CD4-positive, alpha-beta memory T cell (primary cell): ENCODE measurements at regions of chrX and their contacts with region 1.

Region 1: DNA sequence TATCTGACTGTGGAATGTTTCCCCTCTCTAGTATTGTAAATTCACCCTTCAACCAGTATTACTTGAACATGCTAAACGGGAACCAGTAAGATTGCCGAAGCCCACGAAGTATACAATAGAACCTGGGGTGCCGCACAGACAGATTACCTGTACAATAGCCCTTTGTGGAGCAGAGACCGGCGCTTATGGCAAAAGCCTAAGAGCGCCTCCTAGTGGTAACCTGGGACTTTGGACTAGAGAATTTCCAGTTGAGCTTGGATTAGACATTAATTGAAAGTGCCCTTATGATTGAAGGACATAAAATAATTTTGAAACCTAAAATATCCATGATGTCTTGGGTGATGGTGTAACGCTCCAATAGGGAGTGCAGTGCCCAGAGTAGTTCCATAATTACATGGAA is 14.1 kb downstream of the ZNF157 start:
- DNase-seq: peak; percentile 71 to 80 (median 77)
- H3K4me3 ChIP-seq: no peak overlapping the region
- H3K4me3 Mint-ChIP-seq: peak overlapping the region in 1 of 8 donors; percentile 43
- H3K27ac ChIP-seq: no peak overlapping the region
- H3K27ac Mint-ChIP-seq: peak overlapping the region in 2 of 7 donors; percentile 14 to 70
- H3K4me1 ChIP-seq: peaks cover 18% of the 10 kb centered on the region
- H3K4me1 Mint-ChIP-seq: peaks cover 9 to 20% (median 13%) of the 10 kb centered on the region in 4 donors
- H3K27me3 ChIP-seq: no peaks in the 10 kb centered on the region
- H3K27me3 Mint-ChIP-seq: no peaks in the 10 kb centered on the region

Region 2: GRCh38 chrX:46244451-46244850 is 1140.1 kb before region 1 on chrX:
- CTCF ChIA-PET with region 1: no interaction called
- POLR2A ChIA-PET with region 1: no interaction called
- intact Hi-C with region 1: no loop called
- DNase-seq: no peak
- H3K4me3 ChIP-seq: no peak overlapping the region
- H3K4me3 Mint-ChIP-seq: no peak overlapping the region
- H3K27ac ChIP-seq: no peak overlapping the region
- H3K27ac Mint-ChIP-seq: no peak overlapping the region
- H3K4me1 ChIP-seq: no peaks in the 10 kb centered on the region
- H3K4me1 Mint-ChIP-seq: no peaks in the 10 kb centered on the region
- H3K27me3 ChIP-seq: no peaks in the 10 kb centered on the region
- H3K27me3 Mint-ChIP-seq: no peaks in the 10 kb centered on the region

Region 3: DNA sequence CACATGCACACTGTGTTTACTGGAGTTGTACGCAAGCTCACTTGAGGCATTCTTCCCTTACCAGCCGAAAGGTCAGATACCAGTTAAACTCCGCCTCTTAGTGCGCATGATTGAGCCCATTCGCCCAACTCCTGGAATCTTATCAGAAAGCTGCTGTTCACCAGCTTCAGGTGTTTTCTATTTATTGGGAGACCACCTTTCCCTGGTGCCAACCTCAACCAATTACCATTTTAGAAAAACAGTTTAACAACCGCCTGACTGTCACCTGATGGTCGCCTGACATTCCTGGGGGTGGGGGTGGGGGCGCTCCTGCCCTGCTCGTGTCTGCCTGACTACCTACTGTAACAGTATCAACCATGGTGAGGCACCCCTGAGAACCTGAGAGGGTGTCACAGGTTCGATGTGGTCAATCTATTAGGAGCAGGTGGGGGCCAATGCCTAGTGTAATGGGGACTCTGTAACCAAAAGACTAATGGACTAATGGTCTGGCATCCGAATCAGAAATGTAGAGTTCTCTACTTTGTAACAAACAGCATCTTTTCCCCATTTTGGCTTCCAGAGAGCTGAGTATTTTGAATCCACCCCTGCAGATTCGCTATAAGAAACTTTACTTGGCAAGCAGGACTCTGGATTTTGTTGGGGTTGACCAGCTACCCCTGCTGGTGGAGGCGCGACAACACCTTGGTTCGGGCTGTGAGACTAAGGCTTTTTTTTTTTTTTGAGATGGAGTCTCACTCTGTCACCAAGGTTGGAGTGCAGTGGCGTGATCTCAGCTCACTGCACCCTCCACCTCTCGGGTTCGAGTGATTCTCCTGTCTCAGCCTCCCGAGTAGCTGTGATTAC is 72.3 kb before region 1 on chrX:
- CTCF ChIA-PET with region 1: interaction called, 10 read pairs
- POLR2A ChIA-PET with region 1: interaction called, 4 read pairs
- intact Hi-C with region 1: loop called (anchors 5 kb)
- DNase-seq: peak; percentile 40 to 62 (median 47)
- H3K4me3 ChIP-seq: no peak overlapping the region
- H3K4me3 Mint-ChIP-seq: no peak overlapping the region
- H3K27ac ChIP-seq: no peak overlapping the region
- H3K27ac Mint-ChIP-seq: no peak overlapping the region
- H3K4me1 ChIP-seq: no peaks in the 10 kb centered on the region
- H3K4me1 Mint-ChIP-seq: peaks cover 0 to 6% (median under 1%) of the 10 kb centered on the region in 4 donors
- H3K27me3 ChIP-seq: no peaks in the 10 kb centered on the region
- H3K27me3 Mint-ChIP-seq: no peaks in the 10 kb centered on the region

Region 4: DNA sequence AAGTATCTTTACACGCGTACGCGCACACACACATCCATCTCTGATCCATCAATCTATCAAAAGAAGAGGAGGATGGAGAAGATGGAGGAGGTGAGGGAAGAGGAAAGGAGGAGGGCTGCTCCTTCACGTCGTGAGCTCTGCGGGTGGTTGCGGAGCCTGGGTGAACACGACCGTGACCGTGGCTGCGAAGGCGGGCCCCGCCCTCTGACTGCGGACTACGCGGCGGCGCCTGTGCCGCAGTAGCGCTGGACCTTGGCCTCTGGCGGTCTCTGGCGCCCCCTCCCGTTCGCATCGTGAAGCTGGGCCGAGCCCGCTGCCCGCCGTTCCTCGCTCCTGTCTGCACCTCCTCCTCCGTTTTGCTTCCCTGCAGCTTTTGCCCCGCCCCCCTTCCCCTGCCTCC is 138.8 kb after region 1 on chrX:
- CTCF ChIA-PET with region 1: interaction called, 20 read pairs
- POLR2A ChIA-PET with region 1: no interaction called
- intact Hi-C with region 1: loop called (anchors 1 kb)
- DNase-seq: peak; percentile 65 to 75 (median 70)
- H3K4me3 ChIP-seq: peak overlapping the region in 1 of 2 donors; percentile 32
- H3K4me3 Mint-ChIP-seq: peak overlapping the region; percentile 66 to 76 (median 74)
- H3K27ac ChIP-seq: no peak overlapping the region
- H3K27ac Mint-ChIP-seq: peak overlapping the region in 3 of 7 donors; percentile 17 to 25 (median 19)
- H3K4me1 ChIP-seq: peaks cover 5% of the 10 kb centered on the region
- H3K4me1 Mint-ChIP-seq: peaks cover 0 to 4% (median under 1%) of the 10 kb centered on the region in 4 donors
- H3K27me3 ChIP-seq: no peaks in the 10 kb centered on the region
- H3K27me3 Mint-ChIP-seq: no peaks in the 10 kb centered on the region

Region 5: DNA sequence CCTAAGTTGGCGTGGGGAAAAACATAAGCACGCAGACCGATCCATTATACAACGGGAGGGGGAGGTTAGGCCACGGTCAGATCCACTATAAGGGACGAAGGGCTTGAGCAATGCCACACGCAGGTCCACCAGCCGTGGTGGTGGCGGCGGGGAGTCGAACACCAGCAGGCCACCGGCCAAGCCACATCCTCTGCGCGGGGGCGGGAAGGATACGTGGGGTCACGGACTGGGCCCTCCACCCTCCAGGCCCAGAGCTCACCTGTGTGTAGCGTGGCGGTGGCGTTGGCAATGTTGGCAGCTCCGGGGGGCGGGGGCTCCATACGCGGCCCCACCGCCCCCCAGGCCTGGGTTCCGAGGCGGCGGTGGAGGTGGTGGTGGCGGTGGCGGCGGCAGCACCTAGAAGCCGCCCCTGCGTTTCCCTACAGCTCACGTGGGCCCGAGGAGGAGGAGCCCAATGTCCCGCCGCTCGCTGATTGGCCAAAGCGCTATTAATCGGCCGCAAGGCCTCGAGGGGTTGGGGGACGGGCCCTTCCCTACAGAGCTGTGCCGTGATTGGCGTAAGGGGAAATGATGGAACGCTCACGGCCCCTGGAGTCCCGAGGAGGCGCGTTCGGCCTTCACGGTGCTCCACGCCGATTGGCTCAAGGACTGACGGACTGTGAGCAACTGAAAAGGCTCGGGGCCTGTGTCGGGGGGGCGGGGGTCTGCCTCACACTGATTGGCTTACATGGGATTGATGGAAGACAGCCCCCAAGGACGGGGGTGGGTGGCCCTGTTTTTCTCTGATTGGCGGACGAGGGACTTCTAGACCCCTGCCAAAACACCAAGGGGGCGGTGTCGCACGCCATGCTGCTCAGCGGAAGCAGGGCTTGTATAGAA is 265.9 kb after region 1 on chrX and contains the start of gene ELK1:
- CTCF ChIA-PET with region 1: no interaction called
- POLR2A ChIA-PET with region 1: no interaction called
- intact Hi-C with region 1: loop called (anchors 10 kb)
- DNase-seq: peak; percentile 85 to 95 (median 90)
- H3K4me3 ChIP-seq: peak within 1 kb of the TSS in 1 of 2 donors; percentile 69
- H3K4me3 Mint-ChIP-seq: peak within 1 kb of the TSS; percentile 85 to 94 (median 88)
- H3K27ac ChIP-seq: peak within 1 kb of the TSS; percentile 74
- H3K27ac Mint-ChIP-seq: peak within 1 kb of the TSS; percentile 87 to 97 (median 97)
- H3K4me1 ChIP-seq: peaks cover 33% of the 10 kb centered on the region
- H3K4me1 Mint-ChIP-seq: peaks cover 31 to 42% (median 36%) of the 10 kb centered on the region in 4 donors
- H3K27me3 ChIP-seq: no peaks in the 10 kb centered on the region
- H3K27me3 Mint-ChIP-seq: no peaks in the 10 kb centered on the region
- total RNA-seq, gene ELK1: 36.4 to 38.3 TPM